ENCODE measurements at regions of chr19 and their contacts with region 1.

Region 1: GRCh38 chr19:8252922-8253589 is 43.9 kb downstream of the CERS4 start:
- DNase-seq: peak; percentile 95
- H3K4me3 ChIP-seq: no peak overlapping the region; a peak in 1 of 4 replicates
- H3K27ac ChIP-seq: no peak overlapping the region
- H3K4me1 ChIP-seq: no peaks in the 10 kb centered on the region; a peak in 1 of 4 replicates
- H3K27me3 ChIP-seq: no peaks in the 10 kb centered on the region
- CTCF ChIP-seq: peak; percentile 94
- EP300 ChIP-seq: no peak
- RAD21 ChIP-seq: peak; percentile 100

Region 2: DNA sequence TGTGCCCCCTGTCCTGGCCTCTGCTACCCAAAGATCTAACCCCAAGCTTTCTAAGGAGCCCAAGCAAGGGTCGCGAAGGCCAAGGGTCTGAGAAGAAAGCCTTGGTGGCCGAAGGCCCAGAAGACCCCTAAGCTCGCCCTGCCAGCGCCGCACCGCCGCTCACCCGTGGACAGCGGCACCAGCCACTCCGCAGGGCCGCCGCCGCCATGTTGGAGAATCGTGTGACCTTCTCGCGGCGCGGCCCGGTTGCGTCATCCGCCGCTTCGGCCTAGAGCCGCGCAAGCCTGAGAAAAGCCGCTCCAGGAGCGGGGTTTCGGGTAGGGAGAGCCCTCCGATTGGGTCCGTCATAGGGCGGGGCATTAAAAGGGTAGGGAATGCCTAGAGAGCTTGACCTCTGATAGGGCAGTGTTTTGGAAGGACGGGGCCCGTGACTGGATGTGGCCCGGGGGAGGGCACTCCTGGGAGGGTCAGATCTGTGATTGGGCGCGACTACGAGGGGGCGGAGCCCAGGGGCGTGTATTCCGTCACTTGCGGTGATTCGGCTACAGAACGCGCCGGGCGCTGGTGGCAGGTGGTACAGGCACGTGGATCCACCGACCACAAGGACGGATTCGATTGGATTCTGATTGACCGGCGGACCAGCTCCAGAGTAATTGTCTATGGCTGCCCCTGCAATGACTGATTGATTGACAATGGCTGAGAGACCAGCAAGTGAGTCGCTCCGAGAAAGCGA is 309.4 kb before region 1 on chr19 and contains the start of gene TIMM44:
- CTCF ChIA-PET with region 1: interaction called, 16 read pairs
- POLR2A ChIA-PET with region 1: interaction called, 4 read pairs
- DNase-seq: peak; percentile 97
- H3K4me3 ChIP-seq: peak within 1 kb of the TSS; percentile 70 to 74
- H3K27ac ChIP-seq: peak within 1 kb of the TSS; percentile 62 to 85
- H3K4me1 ChIP-seq: peaks cover 0 to 6% of the 10 kb centered on the region in 2 experiments; a peak in 1 of 4 replicates
- H3K27me3 ChIP-seq: no peaks in the 10 kb centered on the region
- CTCF ChIP-seq: no peak
- EP300 ChIP-seq: no peak
- RAD21 ChIP-seq: no peak
- polyA plus RNA-seq, gene TIMM44: 49.7 and 50.9 TPM in 2 replicates

Region 3: GRCh38 chr19:8005534-8006256 is 247.4 kb before region 1 on chr19 and contains the start of gene ELAVL1:
- CTCF ChIA-PET with region 1: interaction called, 10 read pairs
- POLR2A ChIA-PET with region 1: no interaction called
- DNase-seq: peak; percentile 98
- H3K4me3 ChIP-seq: peak within 1 kb of the TSS; percentile 71 to 90
- H3K27ac ChIP-seq: peak within 1 kb of the TSS; percentile 66 to 73
- H3K4me1 ChIP-seq: peaks cover 5 to 23% of the 10 kb centered on the region in 2 experiments; a peak in 2 of 4 replicates
- H3K27me3 ChIP-seq: no peaks in the 10 kb centered on the region
- CTCF ChIP-seq: no peak
- EP300 ChIP-seq: no peak
- RAD21 ChIP-seq: no peak
- polyA plus RNA-seq, gene ELAVL1: 41.7 and 49.6 TPM in 2 replicates

Region 4: GRCh38 chr19:8158411-8159074 is 94.5 kb before region 1 on chr19:
- CTCF ChIA-PET with region 1: interaction called, 68 read pairs
- POLR2A ChIA-PET with region 1: no interaction called
- DNase-seq: peak; percentile 78
- H3K4me3 ChIP-seq: no peak overlapping the region; a peak in 1 of 4 replicates
- H3K27ac ChIP-seq: no peak overlapping the region
- H3K4me1 ChIP-seq: peaks cover 3 to 7% of the 10 kb centered on the region in 2 experiments; a peak in 2 of 4 replicates
- H3K27me3 ChIP-seq: no peaks in the 10 kb centered on the region; the same call in 1 of the 2 replicates
- CTCF ChIP-seq: peak; percentile 68
- EP300 ChIP-seq: no peak
- RAD21 ChIP-seq: peak; percentile 96

Region 5: GRCh38 chr19:8208922-8209461 is 44.1 kb before region 1 on chr19 and contains the start of gene CERS4:
- CTCF ChIA-PET with region 1: interaction called, 10 read pairs
- POLR2A ChIA-PET with region 1: no interaction called
- DNase-seq: peak; percentile 98
- H3K4me3 ChIP-seq: peak within 1 kb of the TSS; percentile 68 to 87
- H3K27ac ChIP-seq: peak within 1 kb of the TSS in 1 of 2 experiments; percentile 73; a peak in 2 of 4 replicates
- H3K4me1 ChIP-seq: peaks cover 0 to 16% of the 10 kb centered on the region in 2 experiments; a peak in 2 of 4 replicates
- H3K27me3 ChIP-seq: no peaks in the 10 kb centered on the region
- CTCF ChIP-seq: no peak
- EP300 ChIP-seq: no peak
- RAD21 ChIP-seq: no peak
- polyA plus RNA-seq, gene CERS4: 36.5 and 41.4 TPM in 2 replicates

Region 6: DNA sequence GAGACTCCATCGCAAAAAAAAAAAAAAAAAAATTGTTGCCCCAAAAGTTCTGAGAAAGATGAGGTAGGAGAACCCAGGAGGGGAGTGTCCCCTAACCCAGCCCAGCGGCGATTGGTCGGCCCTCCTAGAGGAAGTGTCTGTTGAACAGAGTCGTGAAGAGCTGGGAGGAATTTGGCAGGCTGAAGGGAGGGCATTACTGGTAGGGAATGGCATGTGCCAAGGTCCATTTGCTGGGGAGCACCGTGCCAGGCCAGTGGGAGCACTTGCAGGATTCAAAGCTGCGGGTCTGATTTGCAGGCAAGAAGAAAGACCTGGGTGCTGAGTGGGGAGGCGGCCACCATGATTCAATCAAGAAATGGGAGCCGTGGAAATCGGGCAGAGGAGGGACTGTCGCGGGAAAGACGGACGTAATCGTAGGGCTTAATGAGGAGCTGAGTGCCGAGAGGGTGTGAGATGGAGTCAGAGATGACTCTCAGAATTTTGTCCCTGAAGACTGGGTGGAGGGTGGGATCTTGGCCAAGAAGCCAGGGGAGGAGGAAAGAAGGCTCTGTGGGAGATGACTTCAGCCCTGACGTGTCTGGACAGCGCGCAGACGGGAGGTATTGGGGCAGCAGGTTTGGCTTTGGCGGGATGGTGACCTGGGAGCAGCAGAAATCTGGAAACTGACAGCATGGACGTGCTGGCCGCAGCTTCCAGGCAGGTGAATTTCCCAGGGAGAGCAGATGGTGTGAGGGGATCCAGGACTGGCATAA is 28.5 kb before region 1 on chr19:
- CTCF ChIA-PET with region 1: no interaction called
- POLR2A ChIA-PET with region 1: no interaction called
- DNase-seq: no peak
- H3K4me3 ChIP-seq: no peak overlapping the region
- H3K27ac ChIP-seq: no peak overlapping the region
- H3K4me1 ChIP-seq: no peaks in the 10 kb centered on the region
- H3K27me3 ChIP-seq: no peaks in the 10 kb centered on the region
- CTCF ChIP-seq: no peak
- EP300 ChIP-seq: no peak
- RAD21 ChIP-seq: no peak

Region 7: DNA sequence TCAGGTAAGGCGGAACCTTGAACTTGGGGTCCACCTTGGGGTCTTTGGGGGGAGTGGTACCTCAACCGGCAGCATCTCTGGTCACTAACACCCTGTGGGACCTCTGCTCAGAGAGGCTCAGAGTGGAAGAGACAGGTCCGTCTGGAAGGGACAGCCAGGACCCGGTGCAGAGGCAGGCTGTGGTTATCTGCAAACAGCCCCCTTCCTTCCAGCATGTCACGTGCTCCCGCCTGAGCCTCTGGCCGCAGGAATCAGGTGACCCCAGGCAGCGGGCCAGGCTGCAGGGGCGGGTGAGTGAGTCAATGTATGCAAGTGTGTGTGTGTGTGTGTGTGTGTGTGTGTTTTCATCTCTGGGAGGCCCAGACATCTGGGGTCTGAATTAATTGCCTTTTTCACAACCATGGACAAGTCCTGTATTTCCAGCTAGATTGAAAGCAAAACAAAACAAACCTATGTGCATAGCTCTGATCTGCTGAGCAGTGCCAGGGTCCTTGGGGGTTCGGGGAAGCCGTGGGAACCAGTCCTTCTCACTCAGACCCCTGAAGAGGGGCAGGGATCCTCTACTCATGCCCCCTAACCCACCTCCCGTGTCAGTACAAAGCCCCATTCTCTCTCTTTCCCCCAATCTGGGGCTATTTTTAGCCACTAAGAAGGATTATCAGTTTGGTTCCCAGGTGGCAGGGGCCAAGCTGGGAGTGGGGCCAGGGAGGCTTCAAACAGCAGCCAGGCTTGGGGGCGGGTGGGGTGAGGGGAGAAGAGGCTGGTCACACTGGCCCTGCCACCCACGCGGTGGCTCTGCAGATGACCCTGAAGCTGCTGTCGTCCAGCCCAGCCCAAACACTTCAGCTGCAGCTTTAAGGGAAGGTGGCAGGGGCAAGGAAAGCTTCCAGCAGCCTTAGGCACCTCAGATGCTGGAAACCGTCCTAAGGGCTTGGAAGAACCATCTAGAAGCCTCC is 12.5 kb before region 1 on chr19:
- CTCF ChIA-PET with region 1: interaction called, 35 read pairs
- POLR2A ChIA-PET with region 1: interaction called, 4 read pairs
- DNase-seq: peak; percentile 93
- H3K4me3 ChIP-seq: no peak overlapping the region
- H3K27ac ChIP-seq: peak overlapping the region; percentile 14 to 91; a peak in 2 of 4 replicates
- H3K4me1 ChIP-seq: peaks cover 4 to 18% of the 10 kb centered on the region in 2 experiments; a peak in 2 of 4 replicates
- H3K27me3 ChIP-seq: no peaks in the 10 kb centered on the region
- CTCF ChIP-seq: no peak
- EP300 ChIP-seq: peak; percentile 12 to 78; a peak in 3 of 4 replicates
- RAD21 ChIP-seq: 0 out of 2 replicates have a peak, but pooled peaks have one; percentile 20

Region 8: DNA sequence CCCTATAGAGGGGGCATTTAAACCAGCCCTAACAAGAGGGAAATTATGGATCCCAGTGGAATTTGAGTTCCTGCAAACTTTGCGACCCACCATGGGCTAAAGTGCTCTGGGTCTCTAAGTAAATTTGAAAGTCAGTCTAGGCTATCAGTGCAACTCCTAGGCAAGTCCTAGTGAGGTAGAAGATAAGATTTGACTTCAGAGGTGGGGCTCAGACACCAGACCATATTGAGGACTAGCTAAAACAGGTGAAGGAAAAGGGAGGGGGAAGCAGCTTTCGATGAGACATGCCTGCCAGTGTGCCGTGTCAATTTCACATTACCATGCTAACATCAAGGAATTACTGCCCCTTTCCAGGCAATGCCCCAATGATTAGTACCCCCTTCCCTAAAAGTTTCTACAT is 16.7 kb after region 1 on chr19:
- CTCF ChIA-PET with region 1: interaction called, 13 read pairs
- POLR2A ChIA-PET with region 1: no interaction called
- DNase-seq: no peak
- H3K4me3 ChIP-seq: no peak overlapping the region
- H3K27ac ChIP-seq: no peak overlapping the region
- H3K4me1 ChIP-seq: peaks cover 0 to 4% of the 10 kb centered on the region in 2 experiments; a peak in 1 of 4 replicates
- H3K27me3 ChIP-seq: no peaks in the 10 kb centered on the region; the same call in 1 of the 2 replicates
- CTCF ChIP-seq: no peak
- EP300 ChIP-seq: no peak
- RAD21 ChIP-seq: no peak